Heart right ventricle (tissue), 16 donors: ENCODE measurements at regions of chrX and their contacts with region 1.

Region 1: DNA sequence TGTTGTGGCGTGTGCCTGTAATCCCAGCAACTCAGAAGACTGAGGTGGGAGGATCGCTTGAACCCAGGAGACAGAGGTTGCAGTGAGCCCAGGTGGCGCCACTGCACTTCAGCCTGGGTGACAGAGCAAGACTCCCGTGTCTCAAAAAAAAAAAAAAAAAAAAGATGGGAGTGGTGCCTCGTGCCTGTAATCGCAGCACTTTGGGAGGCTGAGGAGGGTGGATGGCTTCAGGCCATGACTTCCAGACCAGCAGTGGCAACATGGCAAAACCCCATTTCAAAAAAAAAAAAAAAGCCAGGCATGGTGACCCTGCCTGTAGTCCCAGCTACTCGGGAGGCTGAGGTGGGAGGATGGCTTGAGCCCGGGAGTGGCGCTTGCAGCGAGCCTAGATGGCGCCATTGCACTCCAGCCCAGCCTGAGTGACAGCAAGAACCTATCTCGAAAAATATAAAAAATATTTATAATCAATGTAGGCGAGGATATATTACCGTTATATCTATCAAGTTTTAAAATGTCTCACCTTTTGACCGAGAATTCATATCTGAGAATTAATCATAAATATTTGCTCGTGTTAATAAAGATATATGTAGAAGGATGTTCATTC is 27.0 kb downstream of the EIF2S3 start:
- DNase-seq: peak; percentile 32 to 47
- ATAC-seq: peak; percentile 50 to 78 (median 66)
- H3K4me3 ChIP-seq: no peak overlapping the region
- H3K27ac ChIP-seq: no peak overlapping the region
- H3K4me1 ChIP-seq: peaks cover 0 to 4% (median 0%) of the 10 kb centered on the region in 9 donors
- H3K27me3 ChIP-seq: peaks cover 0 to 20% (median 0%) of the 10 kb centered on the region in 7 donors
- CTCF ChIP-seq: peak; percentile 9 to 66 (median 46)

Region 2: DNA sequence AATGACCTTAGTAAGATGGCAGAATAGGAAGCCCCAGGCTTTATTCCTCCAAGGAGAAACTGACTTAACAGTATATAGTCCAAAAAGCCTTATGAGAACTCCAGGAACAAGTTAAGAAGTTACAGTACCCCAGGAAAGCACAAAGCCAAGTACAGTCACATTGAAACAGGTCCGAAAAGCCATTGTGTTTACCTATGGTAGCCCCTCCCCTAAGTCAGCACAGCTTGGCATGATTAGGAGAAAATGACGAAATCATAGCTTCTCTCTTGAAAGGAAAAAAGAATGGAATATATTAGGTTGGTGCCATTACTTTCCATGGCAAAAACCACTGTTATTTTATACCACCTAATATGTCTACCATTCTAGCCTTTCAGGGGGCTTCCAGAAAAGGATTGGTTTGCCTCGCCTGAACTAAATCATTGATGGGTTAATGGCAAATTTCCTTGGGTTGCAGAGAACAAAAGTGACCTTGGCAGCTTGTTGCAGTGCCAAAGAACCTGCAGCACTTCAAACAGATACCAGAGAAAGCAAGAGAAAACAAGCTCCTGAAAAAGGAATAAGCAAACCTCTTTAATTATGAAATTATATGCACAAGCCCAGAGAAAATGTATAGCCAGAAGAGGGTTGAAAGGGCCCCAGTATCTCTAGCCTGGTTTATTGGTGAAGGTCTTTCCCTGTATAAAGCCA is 616.5 kb before region 1 on chrX:
- intact Hi-C with region 1: no loop called
- DNase-seq: no peak
- ATAC-seq: no peak
- H3K4me3 ChIP-seq: no peak overlapping the region
- H3K27ac ChIP-seq: no peak overlapping the region
- H3K4me1 ChIP-seq: no peaks in the 10 kb centered on the region
- H3K27me3 ChIP-seq: no peaks in the 10 kb centered on the region
- CTCF ChIP-seq: no peak

Region 3: DNA sequence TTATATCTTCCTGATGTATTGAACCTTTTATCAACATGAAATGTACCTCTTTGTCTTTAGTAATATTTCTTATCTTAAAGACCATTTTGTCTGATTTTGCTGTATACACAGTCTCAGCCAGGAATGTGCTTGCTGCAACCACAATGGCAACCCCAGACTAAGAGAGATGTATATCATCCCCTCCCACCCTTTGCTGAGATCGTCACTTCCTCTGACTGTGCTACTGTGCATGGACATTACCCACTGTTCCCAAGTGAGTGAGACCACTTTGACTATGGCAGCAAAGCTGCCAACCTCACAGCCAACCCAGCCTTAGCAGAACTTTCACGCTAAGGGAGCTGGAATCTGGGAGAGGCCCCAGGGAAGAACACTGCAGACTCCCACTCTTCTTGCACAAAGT is 18.9 kb after region 1 on chrX:
- intact Hi-C with region 1: no loop called
- DNase-seq: no peak
- ATAC-seq: no peak
- H3K4me3 ChIP-seq: no peak overlapping the region
- H3K27ac ChIP-seq: no peak overlapping the region
- H3K4me1 ChIP-seq: no peaks in the 10 kb centered on the region
- H3K27me3 ChIP-seq: peaks cover 0 to 31% (median 0%) of the 10 kb centered on the region in 7 donors
- CTCF ChIP-seq: no peak

Region 4: GRCh38 chrX:24133280-24133679 is 51.5 kb after region 1 on chrX:
- intact Hi-C with region 1: loop called in 1 of 10 experiments (anchors 10 kb)
- DNase-seq: no peak
- ATAC-seq: no peak
- H3K4me3 ChIP-seq: no peak overlapping the region
- H3K27ac ChIP-seq: no peak overlapping the region
- H3K4me1 ChIP-seq: no peaks in the 10 kb centered on the region
- H3K27me3 ChIP-seq: peaks cover 0 to 46% (median 0%) of the 10 kb centered on the region in 7 donors
- CTCF ChIP-seq: no peak

Region 5: GRCh38 chrX:24241822-24242648 is 160.3 kb after region 1 on chrX:
- intact Hi-C with region 1: loop called in 9 of 10 experiments (anchors 2 to 10 kb)
- DNase-seq: peak in 1 of 2 donors; percentile 32
- ATAC-seq: peak; percentile 39 to 89 (median 66)
- H3K4me3 ChIP-seq: no peak overlapping the region
- H3K27ac ChIP-seq: peak overlapping the region in 2 of 10 donors; percentile 6 to 47
- H3K4me1 ChIP-seq: peaks cover 0 to 5% (median 0%) of the 10 kb centered on the region in 9 donors
- H3K27me3 ChIP-seq: peaks cover 0 to 60% (median 0%) of the 10 kb centered on the region in 7 donors
- CTCF ChIP-seq: peak in 7 of 9 donors; percentile 32 to 57 (median 48)

Region 6: DNA sequence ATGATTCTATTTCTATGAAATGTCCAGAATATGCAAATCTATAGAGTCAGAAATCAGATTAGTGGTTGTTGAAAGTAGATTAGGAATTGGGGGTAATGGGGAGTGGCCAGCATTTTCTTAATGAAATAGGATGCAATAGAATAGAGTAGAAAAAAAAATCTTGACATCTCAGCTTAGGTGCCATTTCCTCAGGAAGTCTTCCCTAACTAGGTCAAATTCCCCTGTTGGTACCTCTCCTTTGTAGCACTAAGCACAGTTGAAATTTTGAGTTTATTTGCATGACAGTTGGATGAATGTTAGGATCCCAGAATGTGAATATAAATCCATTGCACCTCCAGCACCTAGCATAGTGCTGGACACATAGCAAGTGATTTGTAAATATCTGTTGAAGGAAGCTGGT is 353.3 kb after region 1 on chrX:
- intact Hi-C with region 1: no loop called
- DNase-seq: no peak
- ATAC-seq: no peak
- H3K4me3 ChIP-seq: no peak overlapping the region
- H3K27ac ChIP-seq: no peak overlapping the region
- H3K4me1 ChIP-seq: no peaks in the 10 kb centered on the region
- H3K27me3 ChIP-seq: peaks cover 0 to 40% (median 0%) of the 10 kb centered on the region in 7 donors
- CTCF ChIP-seq: no peak